ENCODE measurements at regions of chr1 and their contacts with region 1.

Region 1: DNA sequence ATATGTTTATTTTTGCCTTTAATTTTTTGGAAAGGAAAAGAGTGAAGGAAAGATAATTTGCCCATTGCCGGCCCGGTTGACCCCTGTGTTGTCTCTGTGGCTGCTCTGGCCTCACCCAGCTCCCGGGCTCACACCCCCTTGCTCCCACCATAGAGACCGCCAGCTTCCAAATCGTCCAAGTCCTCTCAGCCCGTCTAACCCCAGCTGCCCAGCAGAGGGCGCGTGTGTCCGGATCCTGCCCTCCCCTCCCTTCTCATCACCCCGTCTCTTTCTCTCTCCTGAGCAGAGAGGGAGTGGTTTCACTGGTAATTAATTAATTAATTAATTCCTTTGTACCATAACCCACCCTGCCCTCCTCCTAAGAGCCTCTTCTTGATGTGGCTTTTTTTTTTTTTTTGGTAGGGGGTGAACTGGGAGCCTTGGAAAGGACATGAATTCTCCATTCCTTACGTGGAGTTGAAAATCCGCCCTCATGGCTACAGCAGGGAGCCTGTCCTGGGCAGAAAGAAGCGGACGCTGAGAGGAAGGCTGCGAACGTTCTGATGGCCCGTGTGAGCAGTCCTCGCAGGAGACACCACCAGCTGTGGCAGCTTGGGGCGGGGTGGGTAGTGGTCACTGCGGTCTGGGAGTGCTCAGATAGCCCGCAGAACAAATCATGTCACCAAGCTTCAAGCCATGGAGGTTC is 45.9 kb downstream of the KIAA0040 start:
- DNase-seq: peak; percentile 81
- ATAC-seq: peak; percentile 84
- H3K4me3 Mint-ChIP-seq: no peak overlapping the region
- H3K27ac Mint-ChIP-seq: no peak overlapping the region
- H3K4me1 Mint-ChIP-seq: peaks cover 7% of the 10 kb centered on the region
- H3K27me3 Mint-ChIP-seq: peaks cover 33% of the 10 kb centered on the region

Region 2: DNA sequence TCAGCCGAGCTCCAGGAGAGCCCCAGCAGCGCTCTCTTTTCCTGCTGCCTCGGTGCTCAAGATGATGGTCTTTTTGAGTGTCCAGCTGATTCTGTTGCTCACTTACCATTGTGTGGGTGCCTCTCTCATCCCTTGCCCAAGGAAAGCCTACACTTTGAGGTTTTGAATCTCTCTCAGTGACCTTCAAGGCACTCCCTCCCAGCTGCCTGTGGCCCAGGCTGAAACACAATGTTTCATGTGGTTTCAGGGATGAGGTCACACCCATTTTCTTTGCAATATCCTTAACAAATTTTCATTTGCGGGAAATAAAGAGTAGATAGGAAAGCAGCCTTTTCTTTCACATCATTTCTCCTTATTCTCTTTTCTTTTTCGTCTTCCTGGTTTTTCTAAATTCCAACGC is 110.8 kb before region 1 on chr1:
- CTCF ChIA-PET with region 1: interaction called, 61 read pairs
- DNase-seq: no peak
- ATAC-seq: no peak
- H3K4me3 Mint-ChIP-seq: no peak overlapping the region
- H3K27ac Mint-ChIP-seq: no peak overlapping the region
- H3K4me1 Mint-ChIP-seq: no peaks in the 10 kb centered on the region
- H3K27me3 Mint-ChIP-seq: peaks cover 17% of the 10 kb centered on the region

Region 3: GRCh38 chr1:175174309-175175165 is 27.9 kb after region 1 on chr1:
- CTCF ChIA-PET with region 1: interaction called, 20 read pairs
- DNase-seq: no peak
- ATAC-seq: peak; percentile 30
- H3K4me3 Mint-ChIP-seq: no peak overlapping the region
- H3K27ac Mint-ChIP-seq: peak overlapping the region; percentile 35
- H3K4me1 Mint-ChIP-seq: peaks cover 40% of the 10 kb centered on the region
- H3K27me3 Mint-ChIP-seq: no peaks in the 10 kb centered on the region

Region 4: GRCh38 chr1:175319418-175320230 is 173.0 kb after region 1 on chr1:
- CTCF ChIA-PET with region 1: interaction called, 269 read pairs
- DNase-seq: peak; percentile 78
- ATAC-seq: peak; percentile 93
- H3K4me3 Mint-ChIP-seq: no peak overlapping the region
- H3K27ac Mint-ChIP-seq: no peak overlapping the region
- H3K4me1 Mint-ChIP-seq: peaks cover 6% of the 10 kb centered on the region
- H3K27me3 Mint-ChIP-seq: peaks cover 6% of the 10 kb centered on the region

Region 5: DNA sequence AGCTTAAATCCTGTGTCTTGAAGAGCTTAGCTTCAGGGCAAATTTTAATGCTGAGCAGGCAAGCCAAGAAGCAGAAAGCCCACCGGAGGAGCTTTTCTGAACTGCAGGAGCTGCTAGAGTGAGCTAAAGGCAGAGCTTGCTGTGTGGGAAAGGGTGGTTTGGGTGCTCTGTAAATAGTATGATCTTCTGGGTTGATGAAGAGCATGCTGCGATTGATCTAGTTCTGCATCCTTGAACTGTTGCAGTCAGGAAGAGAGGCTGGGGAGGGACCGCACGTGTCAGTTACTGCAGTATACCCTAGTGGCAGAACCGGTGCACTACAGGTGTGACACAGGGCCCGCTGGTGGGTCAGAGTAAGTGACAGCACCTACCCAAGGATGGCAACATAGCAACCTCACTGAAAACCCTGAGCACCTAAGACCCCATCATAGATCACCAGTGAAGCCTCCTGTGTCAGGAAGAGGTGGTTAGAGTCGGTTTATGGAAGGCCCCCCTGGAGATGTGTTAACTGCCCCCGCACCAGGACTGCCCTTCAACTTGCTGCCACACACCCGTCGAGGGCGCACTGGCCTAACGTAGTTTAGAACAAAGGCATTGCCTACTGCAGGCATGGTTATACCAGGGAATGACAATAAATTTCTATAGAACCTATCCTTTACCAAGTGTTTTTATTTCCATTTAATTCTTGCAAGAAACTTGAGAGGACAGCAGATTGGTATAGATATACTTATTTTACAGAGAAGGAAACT is 191.9 kb after region 1 on chr1:
- CTCF ChIA-PET with region 1: interaction called, 20 read pairs
- DNase-seq: peak; percentile 68
- ATAC-seq: peak; percentile 70
- H3K4me3 Mint-ChIP-seq: no peak overlapping the region
- H3K27ac Mint-ChIP-seq: no peak overlapping the region
- H3K4me1 Mint-ChIP-seq: no peaks in the 10 kb centered on the region
- H3K27me3 Mint-ChIP-seq: peaks cover 21% of the 10 kb centered on the region